Activated CD4-positive, alpha-beta memory T cell treated with anti-CD3 and anti-CD28 coated beads for 36 hours (primary cell): ENCODE measurements at regions of chr5 and their contacts with region 1.

Region 1: DNA sequence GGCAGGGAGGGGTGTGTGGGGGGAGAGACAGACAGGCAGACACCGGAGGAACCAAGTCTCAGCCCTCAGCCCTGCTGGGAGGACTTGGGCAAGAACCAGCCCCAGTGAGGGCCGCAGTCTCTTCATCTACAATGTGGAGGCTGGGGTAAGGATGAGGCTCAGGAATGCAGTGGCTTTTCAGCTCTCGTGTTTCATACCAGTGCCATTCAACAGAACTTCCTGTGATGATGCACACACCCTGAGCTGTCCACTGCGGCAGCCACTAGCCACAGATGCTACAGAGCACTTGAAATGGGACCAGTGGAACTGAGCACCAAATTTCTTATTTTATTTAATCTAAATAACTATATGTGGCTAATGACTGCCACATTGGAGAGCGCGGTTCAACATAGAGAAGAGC is 10.7 kb downstream of the CAMK2A start:
- DNase-seq: no peak
- H3K4me3 Mint-ChIP-seq: no peak overlapping the region
- H3K27ac Mint-ChIP-seq: no peak overlapping the region
- H3K4me1 Mint-ChIP-seq: no peaks in the 10 kb centered on the region
- H3K27me3 Mint-ChIP-seq: peaks cover 4% of the 10 kb centered on the region

Region 2: DNA sequence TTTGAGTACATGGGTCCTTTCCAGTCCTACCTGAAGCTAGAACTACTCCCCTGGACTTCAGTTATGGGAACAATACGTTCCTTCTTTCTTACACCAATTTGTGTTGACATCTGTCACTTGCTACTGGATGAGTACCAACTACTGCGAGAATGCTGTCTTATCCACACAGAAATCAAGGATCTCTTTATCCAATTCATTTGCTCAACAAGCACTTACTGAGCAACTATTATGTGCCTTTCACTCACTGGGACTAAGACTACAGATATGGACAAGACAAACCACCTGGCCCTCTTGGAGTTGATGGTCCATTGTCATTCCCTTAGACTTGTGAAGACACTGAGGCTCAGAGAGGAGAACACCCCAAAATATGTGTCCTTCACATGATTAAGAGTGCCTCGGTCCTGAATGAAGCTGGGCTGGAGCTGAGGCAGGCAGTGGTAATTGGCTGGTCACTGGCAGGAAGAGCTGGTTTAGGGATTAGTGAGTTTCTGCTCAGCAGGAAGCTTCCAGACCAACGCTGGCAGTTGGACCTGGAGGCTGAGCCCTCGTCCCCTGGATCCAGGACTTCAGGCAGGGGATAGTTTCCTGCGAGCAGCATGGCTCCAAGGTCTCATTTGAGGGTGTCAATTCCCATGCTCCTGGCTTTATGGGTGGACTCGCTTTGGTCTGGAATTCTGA is 32.2 kb after region 1 on chr5:
- CTCF ChIA-PET with region 1: no interaction called
- POLR2A ChIA-PET with region 1: no interaction called
- intact Hi-C with region 1: loop called (anchors 5 kb)
- DNase-seq: no peak
- H3K4me3 Mint-ChIP-seq: no peak overlapping the region
- H3K27ac Mint-ChIP-seq: no peak overlapping the region
- H3K4me1 Mint-ChIP-seq: no peaks in the 10 kb centered on the region
- H3K27me3 Mint-ChIP-seq: peaks cover 4% of the 10 kb centered on the region